SK-N-SH (cell line): ENCODE measurements at regions of chr11 and their contacts with region 1.

Region 1: GRCh38 chr11:1917671-1918516 is 1.6 kb upstream of the TNNT3 start:
- DNase-seq: peak; percentile 59
- H3K4me3 ChIP-seq: no peak overlapping the region
- H3K27ac ChIP-seq: no peak overlapping the region
- H3K4me1 ChIP-seq: peaks cover 0 to 21% of the 10 kb centered on the region in 2 experiments; a peak in 1 of 4 replicates
- H3K27me3 ChIP-seq: no peaks in the 10 kb centered on the region
- CTCF ChIP-seq: peak; percentile 41; the same call in 1 of the 2 replicates
- EP300 ChIP-seq: no peak
- RAD21 ChIP-seq: no peak

Region 2: GRCh38 chr11:1889224-1890120 is 28.4 kb before region 1 on chr11:
- CTCF ChIA-PET with region 1: interaction called, 11 read pairs
- POLR2A ChIA-PET with region 1: no interaction called
- DNase-seq: peak; percentile 29
- H3K4me3 ChIP-seq: no peak overlapping the region
- H3K27ac ChIP-seq: no peak overlapping the region
- H3K4me1 ChIP-seq: peaks cover 0 to 6% of the 10 kb centered on the region in 2 experiments; a peak in 1 of 4 replicates
- H3K27me3 ChIP-seq: no peaks in the 10 kb centered on the region
- CTCF ChIP-seq: no peak
- EP300 ChIP-seq: no peak
- RAD21 ChIP-seq: no peak